OCI-LY7 (cell line): ENCODE measurements at regions of chr2 and their contacts with region 1.

Region 1: GRCh38 chr2:211405036-211405435 is 848.6 kb downstream of the CPS1 start:
- DNase-seq: no peak
- H3K4me3 ChIP-seq: no peak overlapping the region
- H3K27ac ChIP-seq: no peak overlapping the region
- H3K4me1 ChIP-seq: no peaks in the 10 kb centered on the region
- CTCF ChIP-seq: no peak

Region 2: DNA sequence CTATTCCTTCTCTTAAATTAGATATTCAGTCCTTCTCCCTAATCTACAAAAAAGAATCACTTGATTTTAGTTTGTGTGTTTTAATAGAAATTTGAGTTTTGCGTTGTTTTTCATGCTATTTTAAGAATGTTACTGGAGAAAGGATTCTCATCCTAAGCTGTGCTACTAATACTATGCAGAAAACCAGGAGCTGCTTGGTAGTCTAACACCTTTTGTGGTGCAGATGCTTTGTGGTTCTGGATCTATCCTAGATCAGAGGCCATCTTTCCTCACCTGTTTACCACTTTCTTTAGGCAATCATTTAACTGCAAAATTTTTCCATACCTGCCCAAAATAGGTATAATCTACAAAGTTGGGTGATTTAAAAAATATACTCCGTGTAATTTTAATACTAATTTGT is 25.0 kb before region 1 on chr2:
- CTCF ChIA-PET with region 1: no interaction called
- POLR2A ChIA-PET with region 1: interaction called, 3 read pairs
- intact Hi-C with region 1: loop called (anchors 1 kb)
- DNase-seq: no peak
- H3K4me3 ChIP-seq: no peak overlapping the region
- H3K27ac ChIP-seq: no peak overlapping the region
- H3K4me1 ChIP-seq: peaks cover 9% of the 10 kb centered on the region
- CTCF ChIP-seq: no peak